PC-9 (cell line): ENCODE measurements at regions of chr20 and their contacts with region 1.

Region 1: DNA sequence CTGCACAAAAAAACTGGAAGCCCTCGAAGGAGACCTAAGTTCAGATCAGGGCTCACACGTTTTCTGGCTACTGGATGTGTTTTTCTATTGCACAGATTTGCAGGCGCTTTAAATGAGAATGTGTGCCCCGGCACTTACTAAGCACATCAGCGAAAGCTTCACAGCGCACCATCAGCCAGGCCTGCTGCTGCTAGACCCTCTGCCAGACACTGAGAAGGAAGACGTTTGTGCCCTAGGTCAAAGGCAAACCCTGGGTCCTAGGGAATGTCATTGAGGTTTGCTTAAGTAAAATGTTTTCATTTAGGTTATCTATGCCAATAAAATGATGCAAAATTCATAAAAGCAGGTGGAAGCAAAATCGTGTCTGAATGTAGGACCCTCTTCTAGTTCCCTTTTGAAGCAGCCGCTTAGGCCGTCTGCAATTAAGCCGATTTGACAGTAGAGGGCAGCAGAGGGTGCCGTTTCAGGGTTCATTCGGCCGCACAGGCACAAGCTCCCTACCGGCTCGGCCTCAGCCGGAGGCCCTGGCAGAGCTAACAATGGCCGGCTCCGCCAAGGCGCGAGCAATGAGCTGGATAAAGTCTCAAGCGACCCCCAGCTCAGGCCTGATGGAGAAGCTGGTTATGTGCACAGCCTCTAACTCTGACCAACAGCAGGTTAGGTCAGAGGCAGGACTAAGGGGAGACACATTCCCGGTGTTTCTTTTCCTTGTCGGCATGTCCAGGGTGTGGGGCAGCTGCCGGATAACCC is 107.2 kb upstream of the FOXA2 start:
- DNase-seq: peak in 1 of 2 experiments; percentile 72
- H3K4me3 ChIP-seq: no peak overlapping the region
- H3K27ac ChIP-seq: no peak overlapping the region
- H3K4me1 ChIP-seq: no peaks in the 10 kb centered on the region; the same call in 1 of the 2 replicates
- H3K27me3 ChIP-seq: no peaks in the 10 kb centered on the region
- CTCF ChIP-seq: peak; percentile 96

Region 2: DNA sequence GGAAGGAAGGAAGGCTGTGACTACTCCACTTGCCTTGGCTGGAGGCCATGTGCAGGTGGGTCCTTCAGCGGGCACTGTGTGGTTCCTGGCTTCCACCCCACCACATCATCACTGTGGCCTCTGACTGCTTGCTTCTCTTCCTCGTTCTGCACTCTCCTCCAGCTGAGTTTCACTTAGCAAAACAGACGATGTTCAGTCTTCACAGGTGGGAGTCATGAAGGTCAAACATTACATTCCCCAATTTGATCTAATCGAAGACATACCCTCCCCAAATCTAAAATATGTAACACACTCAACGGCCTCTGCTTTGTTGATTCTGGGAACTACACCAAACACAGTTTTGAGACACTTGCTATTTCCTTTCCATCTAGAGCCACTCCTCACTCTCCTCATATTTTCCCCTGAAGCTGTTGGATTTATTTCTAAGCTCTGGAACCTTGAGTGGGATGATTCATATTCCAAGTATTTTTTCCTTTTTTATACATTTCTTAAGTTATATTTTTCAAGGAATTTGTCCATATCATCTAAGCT is 25.3 kb after region 1 on chr20:
- CTCF ChIA-PET with region 1: interaction called, 8 read pairs
- POLR2A ChIA-PET with region 1: no interaction called
- intact Hi-C with region 1: loop called (anchors 2 kb)
- DNase-seq: peak; percentile 57 to 81
- H3K4me3 ChIP-seq: no peak overlapping the region; the same call in 1 of the 2 replicates
- H3K27ac ChIP-seq: peak overlapping the region; percentile 74
- H3K4me1 ChIP-seq: peaks cover 39% of the 10 kb centered on the region
- H3K27me3 ChIP-seq: no peaks in the 10 kb centered on the region
- CTCF ChIP-seq: no peak

Region 3: GRCh38 chr20:22795871-22796270 is 104.3 kb after region 1 on chr20:
- CTCF ChIA-PET with region 1: no interaction called
- POLR2A ChIA-PET with region 1: interaction called, 4 read pairs
- intact Hi-C with region 1: loop called (anchors 5 kb)
- DNase-seq: peak; percentile 74 to 92
- H3K4me3 ChIP-seq: no peak overlapping the region
- H3K27ac ChIP-seq: peak overlapping the region; percentile 93
- H3K4me1 ChIP-seq: peaks cover 58% of the 10 kb centered on the region
- H3K27me3 ChIP-seq: no peaks in the 10 kb centered on the region
- CTCF ChIP-seq: no peak

Region 4: GRCh38 chr20:22890594-22891300 is 199.2 kb after region 1 on chr20:
- CTCF ChIA-PET with region 1: no interaction called
- POLR2A ChIA-PET with region 1: no interaction called
- intact Hi-C with region 1: loop called (anchors 10 kb)
- DNase-seq: no peak
- H3K4me3 ChIP-seq: no peak overlapping the region
- H3K27ac ChIP-seq: no peak overlapping the region
- H3K4me1 ChIP-seq: no peaks in the 10 kb centered on the region
- H3K27me3 ChIP-seq: peaks cover 32% of the 10 kb centered on the region; the same call in 1 of the 2 replicates
- CTCF ChIP-seq: no peak

Region 5: GRCh38 chr20:23050847-23051631 is 359.5 kb after region 1 on chr20:
- CTCF ChIA-PET with region 1: no interaction called
- POLR2A ChIA-PET with region 1: no interaction called
- intact Hi-C with region 1: loop called (anchors 1 kb)
- DNase-seq: peak; percentile 73 to 82
- H3K4me3 ChIP-seq: peak overlapping the region; percentile 75
- H3K27ac ChIP-seq: peak overlapping the region; percentile 97
- H3K4me1 ChIP-seq: peaks cover 22% of the 10 kb centered on the region
- H3K27me3 ChIP-seq: no peaks in the 10 kb centered on the region
- CTCF ChIP-seq: peak; percentile 89

Region 6: GRCh38 chr20:23235173-23236027 is 543.9 kb after region 1 on chr20:
- CTCF ChIA-PET with region 1: interaction called, 4 read pairs
- POLR2A ChIA-PET with region 1: no interaction called
- intact Hi-C with region 1: loop called (anchors 5 kb)
- DNase-seq: peak; percentile 43 to 44
- H3K4me3 ChIP-seq: no peak overlapping the region
- H3K27ac ChIP-seq: no peak overlapping the region
- H3K4me1 ChIP-seq: peaks cover 16% of the 10 kb centered on the region
- H3K27me3 ChIP-seq: no peaks in the 10 kb centered on the region
- CTCF ChIP-seq: peak; percentile 88

Region 7: DNA sequence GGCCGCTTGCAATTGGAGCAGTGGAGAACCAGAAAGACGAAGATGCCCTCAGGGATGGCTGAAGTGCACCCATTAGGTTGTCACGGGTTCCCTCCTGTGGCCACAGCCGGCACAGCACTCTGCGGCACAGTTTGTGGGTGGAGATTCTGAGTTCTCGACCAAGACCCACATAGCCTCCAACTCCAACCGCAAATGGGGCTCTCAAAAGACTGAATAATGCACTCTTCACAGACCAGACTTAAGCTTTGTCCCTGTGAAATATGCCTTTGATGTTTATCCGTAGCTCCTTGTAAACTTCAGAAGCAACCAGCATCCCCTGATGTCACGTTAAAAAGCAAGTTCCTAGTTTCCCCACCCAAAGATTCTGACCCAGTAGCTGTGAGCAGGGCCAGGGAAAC is 915.1 kb after region 1 on chr20:
- CTCF ChIA-PET with region 1: no interaction called
- POLR2A ChIA-PET with region 1: no interaction called
- intact Hi-C with region 1: loop called (anchors 10 kb)
- DNase-seq: peak; percentile 67 to 78
- H3K4me3 ChIP-seq: no peak overlapping the region
- H3K27ac ChIP-seq: no peak overlapping the region
- H3K4me1 ChIP-seq: no peaks in the 10 kb centered on the region
- H3K27me3 ChIP-seq: no peaks in the 10 kb centered on the region; the same call in 1 of the 2 replicates
- CTCF ChIP-seq: peak; percentile 92

Region 8: DNA sequence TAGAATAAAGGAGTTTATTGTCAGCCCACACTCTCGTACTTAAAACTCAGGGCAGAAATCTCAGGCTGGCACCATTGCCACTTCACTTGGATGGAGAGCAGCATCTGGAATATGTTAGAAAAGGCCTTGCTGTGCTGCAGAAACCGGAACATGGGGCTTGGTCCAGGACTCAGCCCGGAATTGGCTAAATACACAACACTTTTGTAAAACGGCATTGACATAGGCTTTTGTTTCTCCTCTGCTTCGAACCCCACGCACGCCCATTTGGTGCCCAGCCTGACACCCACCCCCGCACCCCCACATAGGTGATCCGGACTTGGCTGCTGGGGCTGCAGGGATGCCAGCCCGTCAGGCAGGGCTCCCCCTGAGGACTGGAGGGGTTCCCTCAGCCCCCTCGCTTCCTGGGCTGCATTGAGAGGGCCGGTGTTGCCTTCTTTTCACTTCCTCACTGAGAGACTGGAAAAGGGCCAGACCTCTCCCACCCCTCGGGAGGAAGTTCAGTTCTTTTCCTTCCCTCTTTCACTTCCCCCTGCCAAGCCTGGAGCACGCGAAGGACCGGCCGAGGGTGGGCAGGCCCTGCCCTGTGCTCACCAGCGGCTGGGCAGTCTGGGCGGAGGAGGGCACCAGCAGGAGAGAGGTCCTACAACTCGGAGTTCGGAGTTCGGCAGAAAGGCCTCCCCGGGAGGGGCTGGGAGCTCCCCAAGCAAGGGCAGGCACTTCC is 964.1 kb after region 1 on chr20:
- CTCF ChIA-PET with region 1: no interaction called
- POLR2A ChIA-PET with region 1: no interaction called
- intact Hi-C with region 1: no loop called
- DNase-seq: no peak
- H3K4me3 ChIP-seq: no peak overlapping the region
- H3K27ac ChIP-seq: no peak overlapping the region
- H3K4me1 ChIP-seq: no peaks in the 10 kb centered on the region
- H3K27me3 ChIP-seq: no peaks in the 10 kb centered on the region
- CTCF ChIP-seq: no peak